PC-3 (cell line): ENCODE measurements at regions of chr17 and their contacts with region 1.

Region 1: GRCh38 chr17:75271233-75271954 is 363 bp upstream of the MIF4GD start:
- DNase-seq: peak; percentile 90
- ATAC-seq: peak; percentile 53
- H3K4me3 ChIP-seq: peak overlapping the region; percentile 73
- H3K27ac ChIP-seq: peak overlapping the region; percentile 36
- H3K4me1 ChIP-seq: peaks cover 20% of the 10 kb centered on the region
- H3K27me3 ChIP-seq: no peaks in the 10 kb centered on the region
- CTCF ChIP-seq: peak; percentile 57

Region 2: GRCh38 chr17:75228305-75228704 is 43.1 kb before region 1 on chr17:
- CTCF ChIA-PET with region 1: no interaction called
- POLR2A ChIA-PET with region 1: no interaction called
- intact Hi-C with region 1: no loop called
- DNase-seq: no peak
- ATAC-seq: no peak
- H3K4me3 ChIP-seq: no peak overlapping the region
- H3K27ac ChIP-seq: no peak overlapping the region
- H3K4me1 ChIP-seq: no peaks in the 10 kb centered on the region
- H3K27me3 ChIP-seq: no peaks in the 10 kb centered on the region
- CTCF ChIP-seq: no peak

Region 3: DNA sequence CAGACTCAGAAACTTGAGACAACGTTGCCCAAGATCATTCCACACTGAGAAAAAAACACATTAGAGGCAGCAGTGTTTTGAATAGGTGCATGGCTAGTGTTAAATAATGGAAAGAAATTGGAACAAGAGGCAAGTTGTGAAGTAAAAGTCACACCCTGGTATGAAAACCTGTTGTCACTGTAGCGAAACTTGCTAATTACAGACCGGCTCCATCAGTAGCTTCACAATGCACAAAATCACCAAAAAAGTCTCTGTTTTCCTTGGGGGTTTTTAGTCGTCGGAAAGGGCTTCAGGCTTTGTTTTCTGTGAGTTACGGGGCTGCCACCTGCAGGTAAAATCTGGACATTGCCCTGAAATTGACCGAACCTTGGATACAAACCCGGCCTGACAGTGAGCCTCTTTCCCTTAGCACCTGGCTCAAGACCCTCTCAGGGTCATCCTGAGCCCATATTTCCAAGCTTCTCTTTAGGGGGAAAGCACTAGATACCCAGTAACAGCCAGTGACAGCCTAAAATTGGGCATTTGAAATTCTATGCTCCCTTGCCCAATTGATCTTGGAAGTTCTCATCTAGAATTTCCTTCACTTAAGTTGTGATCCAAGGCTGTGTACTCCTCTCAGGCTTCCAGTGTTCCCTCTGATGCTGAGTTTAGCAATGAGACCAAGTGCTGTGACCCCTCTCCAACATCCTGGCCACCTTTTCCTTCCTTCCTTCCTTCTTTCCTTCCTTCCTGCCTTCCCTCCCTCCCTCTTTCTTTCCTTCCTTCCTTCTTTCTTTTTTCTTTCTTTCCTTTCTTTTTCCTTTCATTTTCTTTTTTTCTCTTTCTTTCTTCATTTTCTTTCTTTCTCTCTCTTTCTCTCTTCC is 141.3 kb after region 1 on chr17:
- CTCF ChIA-PET with region 1: interaction called, 11 read pairs
- POLR2A ChIA-PET with region 1: no interaction called
- intact Hi-C with region 1: loop called (anchors 2 kb)
- DNase-seq: peak; percentile 88
- ATAC-seq: peak; percentile 84
- H3K4me3 ChIP-seq: peak overlapping the region; percentile 42
- H3K27ac ChIP-seq: no peak overlapping the region
- H3K4me1 ChIP-seq: 0 out of 2 replicates have a peak, but pooled peaks cover 3% of the 10 kb centered on the region
- H3K27me3 ChIP-seq: no peaks in the 10 kb centered on the region
- CTCF ChIP-seq: peak; percentile 91